ENCODE measurements at regions of chr1 and their contacts with region 1.

Region 1: GRCh38 chr1:114130846-114131525 is 22.7 kb downstream of the SYT6 start:
- DNase-seq: no peak
- ATAC-seq: no peak
- H3K4me3 ChIP-seq: no peak overlapping the region
- H3K27ac ChIP-seq: no peak overlapping the region
- H3K4me1 ChIP-seq: peaks cover 8% of the 10 kb centered on the region; the same call in 1 of the 2 replicates
- H3K27me3 ChIP-seq: no peaks in the 10 kb centered on the region
- CTCF ChIP-seq: no peak

Region 2: DNA sequence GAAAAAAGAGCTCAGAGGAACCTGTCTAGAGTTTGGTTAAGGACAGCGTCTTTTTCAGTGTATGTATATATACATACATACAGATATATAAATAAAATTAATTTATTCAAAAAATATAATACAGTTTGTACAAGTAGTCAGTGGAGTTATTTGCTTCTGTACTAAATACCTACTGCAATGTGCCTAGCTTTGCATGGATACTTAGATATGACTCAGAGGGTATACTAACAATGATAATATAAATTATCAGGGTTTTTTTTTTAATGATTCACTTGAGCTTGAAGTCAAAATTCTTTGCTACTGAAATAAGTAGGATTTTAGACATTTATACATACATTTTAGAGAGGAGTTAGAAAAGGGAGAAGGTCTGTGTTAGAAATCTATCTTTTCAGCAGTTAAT is 489.6 kb before region 1 on chr1:
- CTCF ChIA-PET with region 1: no interaction called
- POLR2A ChIA-PET with region 1: interaction called, 15 read pairs
- intact Hi-C with region 1: no loop called
- DNase-seq: no peak
- ATAC-seq: no peak
- H3K4me3 ChIP-seq: no peak overlapping the region
- H3K27ac ChIP-seq: no peak overlapping the region
- H3K4me1 ChIP-seq: no peaks in the 10 kb centered on the region
- H3K27me3 ChIP-seq: no peaks in the 10 kb centered on the region
- CTCF ChIP-seq: no peak

Region 3: GRCh38 chr1:114263343-114263742 is 132.4 kb after region 1 on chr1:
- CTCF ChIA-PET with region 1: no interaction called
- POLR2A ChIA-PET with region 1: no interaction called
- intact Hi-C with region 1: no loop called
- DNase-seq: no peak
- ATAC-seq: no peak
- H3K4me3 ChIP-seq: no peak overlapping the region
- H3K27ac ChIP-seq: no peak overlapping the region
- H3K4me1 ChIP-seq: no peaks in the 10 kb centered on the region
- H3K27me3 ChIP-seq: peaks cover 83% of the 10 kb centered on the region
- CTCF ChIP-seq: no peak